Uterus (tissue), 4 donors: ENCODE measurements at regions of chr1 and their contacts with region 1.

Region 1: GRCh38 chr1:203038891-203039608 is 12.8 kb downstream of the PPFIA4 start:
- DNase-seq: peak; percentile 77 to 81
- H3K4me3 ChIP-seq: no peak overlapping the region
- H3K27ac ChIP-seq: no peak overlapping the region
- H3K4me1 ChIP-seq: no peaks in the 10 kb centered on the region
- H3K27me3 ChIP-seq: no peaks in the 10 kb centered on the region
- CTCF ChIP-seq: peak; percentile 89 to 92 (median 91)
- POLR2A ChIP-seq: no peak

Region 2: GRCh38 chr1:203219934-203220333 is 180.9 kb after region 1 on chr1:
- intact Hi-C with region 1: loop called (anchors 2 kb)
- DNase-seq: no peak
- H3K4me3 ChIP-seq: no peak overlapping the region
- H3K27ac ChIP-seq: no peak overlapping the region
- H3K4me1 ChIP-seq: no peaks in the 10 kb centered on the region
- H3K27me3 ChIP-seq: no peaks in the 10 kb centered on the region
- CTCF ChIP-seq: no peak
- POLR2A ChIP-seq: no peak